Sigmoid colon (tissue), 7 donors: ENCODE measurements at regions of chr11 and their contacts with region 1.

Region 1: DNA sequence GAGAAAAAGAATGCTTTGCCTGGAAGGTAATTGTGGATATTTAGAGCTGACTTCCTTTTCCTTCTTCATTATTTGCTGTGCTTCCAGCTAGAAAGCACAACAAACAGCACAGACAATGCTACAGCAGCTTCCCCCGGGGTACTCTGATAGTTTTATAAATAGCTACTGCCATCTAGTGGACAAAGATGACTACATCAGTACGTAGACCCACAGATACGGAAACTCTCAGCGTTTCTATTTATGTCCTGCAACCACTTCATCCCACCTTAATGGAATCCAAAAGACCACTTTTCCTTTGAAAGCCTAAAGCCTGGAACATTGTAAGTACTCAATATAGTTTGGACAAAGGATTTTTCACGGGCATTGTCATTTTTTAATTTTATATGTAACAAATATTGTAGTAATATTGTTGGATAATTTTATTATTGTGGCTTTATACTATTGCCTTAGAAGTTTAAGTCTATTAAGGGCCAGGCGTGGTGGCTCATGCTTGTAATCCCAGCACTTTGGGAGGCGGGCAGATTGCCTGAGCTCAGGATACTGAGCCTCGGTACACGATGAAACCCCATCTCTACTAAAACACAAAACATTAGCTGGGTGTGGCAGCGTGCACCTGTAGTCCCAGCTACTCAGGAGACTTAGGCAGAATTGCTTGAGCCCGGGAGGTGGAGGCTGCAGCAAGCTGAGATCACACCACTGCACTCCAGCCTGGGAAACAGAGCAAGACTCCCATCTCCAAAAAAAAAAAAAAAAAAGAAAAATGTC is 7.5 kb downstream of the HSPA8 start:
- DNase-seq: no peak
- H3K4me3 ChIP-seq: no peak overlapping the region
- H3K27ac ChIP-seq: peak overlapping the region in 2 of 4 donors; percentile 4 to 28
- H3K4me1 ChIP-seq: peaks cover 0 to 36% (median 26%) of the 10 kb centered on the region in 4 donors
- H3K27me3 ChIP-seq: no peaks in the 10 kb centered on the region
- CTCF ChIP-seq: peak in 3 of 4 experiments; percentile 48 to 71 (median 63)
- EP300 ChIP-seq: no peak
- POLR2A ChIP-seq: no peak

Region 2: DNA sequence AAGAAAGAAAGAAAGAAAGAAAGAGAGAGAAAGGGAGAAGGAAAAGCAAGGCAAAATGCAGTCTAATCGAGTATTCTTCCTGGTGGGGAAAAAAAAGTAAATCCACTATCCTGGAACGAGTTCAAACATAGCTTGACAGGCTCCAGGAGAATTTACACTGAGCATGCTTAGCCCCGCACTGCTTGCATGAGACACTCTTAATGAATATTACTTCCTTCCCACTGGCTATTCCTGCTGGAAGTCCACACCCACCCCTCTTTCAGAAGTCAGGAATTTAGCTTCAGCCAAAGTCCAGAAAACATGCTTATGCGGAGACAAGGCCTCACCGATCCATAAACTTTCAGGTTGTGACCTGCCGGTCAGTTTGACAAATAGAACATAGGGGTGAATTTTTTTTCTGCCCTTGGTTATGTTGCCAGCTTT is 686.7 kb before region 1 on chr11:
- intact Hi-C with region 1: no loop called
- DNase-seq: peak; percentile 67
- H3K4me3 ChIP-seq: no peak overlapping the region
- H3K27ac ChIP-seq: peak overlapping the region; percentile 4 to 45 (median 33)
- H3K4me1 ChIP-seq: peaks cover 0 to 13% (median 9%) of the 10 kb centered on the region in 4 donors
- H3K27me3 ChIP-seq: no peaks in the 10 kb centered on the region
- CTCF ChIP-seq: no peak
- EP300 ChIP-seq: no peak
- POLR2A ChIP-seq: no peak

Region 3: DNA sequence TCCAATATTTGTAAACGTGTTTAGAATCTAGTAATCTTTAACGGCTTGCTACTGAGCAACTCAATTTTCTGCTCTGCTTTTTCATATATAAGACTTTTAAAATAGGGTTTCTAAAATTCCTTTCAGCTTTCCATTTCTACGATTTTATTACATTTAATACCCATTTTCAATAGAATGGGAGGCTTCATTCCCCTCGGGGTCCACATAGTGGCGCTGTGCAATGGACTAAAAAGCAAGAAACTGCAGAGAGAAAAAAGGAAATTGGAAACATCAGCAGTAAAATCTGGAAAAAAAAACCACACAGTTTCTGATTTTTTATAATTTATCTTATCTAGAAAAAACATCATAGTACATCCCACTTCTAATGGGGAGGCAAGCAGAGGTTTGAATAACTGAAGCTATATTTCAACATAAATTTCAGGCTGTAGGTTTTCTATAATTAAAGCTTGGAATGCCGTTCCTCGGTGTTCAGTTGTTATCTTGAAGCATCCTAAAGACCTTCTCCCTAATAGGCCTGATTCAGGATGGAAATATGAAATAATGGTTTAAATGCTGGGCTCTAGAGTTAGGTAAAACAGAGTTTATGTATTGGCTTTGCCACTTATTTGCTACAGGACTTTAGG is 190.7 kb before region 1 on chr11:
- intact Hi-C with region 1: loop called (anchors 5 kb)
- DNase-seq: no peak
- H3K4me3 ChIP-seq: no peak overlapping the region
- H3K27ac ChIP-seq: no peak overlapping the region
- H3K4me1 ChIP-seq: no peaks in the 10 kb centered on the region
- H3K27me3 ChIP-seq: no peaks in the 10 kb centered on the region
- CTCF ChIP-seq: peak; percentile 43 to 65 (median 48)
- EP300 ChIP-seq: no peak
- POLR2A ChIP-seq: no peak

Region 4: DNA sequence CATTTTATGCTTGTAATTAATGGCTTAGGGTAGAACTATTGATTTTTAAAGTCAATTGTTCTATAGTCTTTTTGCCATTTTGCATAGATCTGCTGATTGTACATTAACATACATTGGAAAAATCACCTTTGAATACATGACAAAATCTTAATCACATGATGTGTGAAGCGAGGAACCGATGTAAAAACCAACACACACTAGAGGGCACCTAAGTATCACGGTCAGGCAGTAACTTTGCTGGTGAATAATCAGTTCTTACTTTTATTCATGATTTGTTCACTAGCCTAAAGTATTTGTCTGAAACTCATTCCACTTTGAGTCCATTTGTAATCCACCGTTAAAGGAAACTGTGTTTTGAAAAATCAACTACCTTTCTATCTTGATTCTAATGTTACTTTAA is 143.7 kb before region 1 on chr11:
- intact Hi-C with region 1: loop called (anchors 10 kb)
- DNase-seq: no peak
- H3K4me3 ChIP-seq: no peak overlapping the region
- H3K27ac ChIP-seq: no peak overlapping the region
- H3K4me1 ChIP-seq: no peaks in the 10 kb centered on the region
- H3K27me3 ChIP-seq: no peaks in the 10 kb centered on the region
- CTCF ChIP-seq: no peak
- EP300 ChIP-seq: no peak
- POLR2A ChIP-seq: no peak

Region 5: GRCh38 chr11:123006860-123007542 is 47.5 kb before region 1 on chr11:
- intact Hi-C with region 1: no loop called
- DNase-seq: no peak
- H3K4me3 ChIP-seq: no peak overlapping the region
- H3K27ac ChIP-seq: no peak overlapping the region
- H3K4me1 ChIP-seq: no peaks in the 10 kb centered on the region
- H3K27me3 ChIP-seq: no peaks in the 10 kb centered on the region
- CTCF ChIP-seq: no peak
- EP300 ChIP-seq: no peak
- POLR2A ChIP-seq: no peak